ENCODE measurements at regions of chr9 and their contacts with region 1.

Region 1: GRCh38 chr9:36169728-36170127 is 540 bp downstream of the CCIN start:
- DNase-seq: no peak
- ATAC-seq: no peak
- H3K4me3 ChIP-seq: no peak overlapping the region
- H3K27ac ChIP-seq: no peak overlapping the region
- H3K4me1 ChIP-seq: no peaks in the 10 kb centered on the region
- H3K27me3 ChIP-seq: no peaks in the 10 kb centered on the region
- CTCF ChIP-seq: no peak
- POLR2A ChIP-seq: no peak

Region 2: GRCh38 chr9:36110434-36110833 is 59.3 kb before region 1 on chr9:
- intact Hi-C with region 1: loop called in 1 of 2 experiments (anchors 10 kb)
- DNase-seq: no peak
- ATAC-seq: peak in 1 of 4 donors; percentile 58
- H3K4me3 ChIP-seq: no peak overlapping the region
- H3K27ac ChIP-seq: no peak overlapping the region
- H3K4me1 ChIP-seq: no peaks in the 10 kb centered on the region
- H3K27me3 ChIP-seq: no peaks in the 10 kb centered on the region
- CTCF ChIP-seq: peak; percentile 17 to 37 (median 28)
- POLR2A ChIP-seq: no peak

Region 3: DNA sequence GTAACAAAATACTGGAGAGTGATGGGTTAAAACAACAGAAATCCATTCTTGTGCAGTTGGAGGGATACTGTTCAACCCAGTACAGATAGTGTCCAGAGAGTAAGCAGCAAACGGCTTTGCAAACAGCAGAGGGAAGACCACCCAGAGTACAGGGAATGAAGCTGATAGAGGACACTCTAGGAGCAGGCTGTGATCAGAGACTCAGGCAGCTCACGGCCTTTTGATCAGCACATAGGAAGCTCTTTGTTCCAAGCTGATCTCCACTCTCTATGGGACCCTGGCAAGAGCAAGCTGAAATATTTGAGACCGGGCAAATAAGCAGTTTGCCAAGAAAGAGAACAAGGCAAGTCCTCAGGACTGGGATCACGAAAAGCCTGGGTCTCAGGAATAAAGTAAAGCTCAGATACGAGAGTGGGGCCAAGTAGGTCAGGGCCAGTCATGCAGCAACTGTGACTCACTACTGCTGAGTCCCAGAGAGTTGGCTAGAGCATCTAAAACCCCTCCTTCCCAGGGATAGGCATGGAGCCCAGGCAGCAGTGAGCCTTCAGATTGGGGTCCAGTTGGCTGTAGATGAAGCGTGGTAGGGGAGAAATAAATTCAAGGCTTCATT is 455.4 kb after region 1 on chr9:
- intact Hi-C with region 1: no loop called
- DNase-seq: no peak
- ATAC-seq: peak in 2 of 4 donors; percentile 19 to 71
- H3K4me3 ChIP-seq: no peak overlapping the region
- H3K27ac ChIP-seq: no peak overlapping the region
- H3K4me1 ChIP-seq: no peaks in the 10 kb centered on the region
- H3K27me3 ChIP-seq: no peaks in the 10 kb centered on the region
- CTCF ChIP-seq: no peak
- POLR2A ChIP-seq: no peak

Measured in right lobe of liver (tissue), 6 donors.